ENCODE measurements at regions of chr3 and their contacts with region 1.

Region 1: DNA sequence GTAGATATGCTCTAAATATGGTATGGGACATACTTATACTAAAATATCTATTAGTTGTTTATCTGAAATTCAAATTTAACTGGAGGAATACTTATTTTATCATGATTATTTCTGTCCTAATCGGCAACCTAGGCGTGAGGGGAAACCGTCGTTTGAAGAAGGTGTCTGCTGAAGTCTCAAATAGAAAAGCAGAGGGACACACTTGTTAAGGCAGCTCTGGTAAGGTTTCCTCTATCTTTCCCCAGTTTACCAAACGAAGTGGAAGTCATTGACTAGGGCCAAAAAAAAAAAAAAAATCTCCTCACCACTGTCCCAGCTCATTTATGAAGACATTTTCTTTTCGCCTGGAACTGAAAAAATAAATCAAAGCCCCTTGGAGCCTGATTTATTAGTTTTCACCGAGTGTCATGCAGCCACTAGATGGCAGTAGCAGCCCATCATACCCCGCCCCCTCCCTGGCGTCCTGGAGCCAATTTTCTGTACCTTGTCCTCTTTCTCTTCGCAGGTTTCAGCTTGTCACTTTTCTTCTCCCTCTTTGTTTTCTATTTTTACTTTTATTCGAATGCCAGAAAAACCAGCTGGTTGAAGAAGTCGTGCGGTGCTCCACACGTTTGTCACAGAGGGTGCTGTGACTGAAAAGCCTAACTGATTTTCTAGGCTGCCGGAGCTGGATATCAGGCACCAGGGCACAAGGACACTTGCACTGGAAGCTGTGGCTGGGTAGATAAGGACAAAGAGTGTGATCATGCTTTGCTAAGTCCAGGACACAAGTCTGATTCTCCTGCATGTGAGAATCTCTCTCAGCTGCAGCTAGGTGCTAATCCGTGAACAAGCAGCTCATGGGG is 238.7 kb downstream of the ZPLD1 start:
- DNase-seq: peak; percentile 33
- ATAC-seq: peak; percentile 96
- H3K4me3 ChIP-seq: no peak overlapping the region
- H3K27ac ChIP-seq: no peak overlapping the region
- H3K4me1 ChIP-seq: peaks cover 16% of the 10 kb centered on the region
- H3K27me3 ChIP-seq: no peaks in the 10 kb centered on the region
- CTCF ChIP-seq: peak; percentile 86
- EP300 ChIP-seq: no peak
- POLR2A ChIP-seq: no peak
- RAD21 ChIP-seq: peak; percentile 69; the same call in 1 of the 2 replicates

Region 2: GRCh38 chr3:102229062-102229655 is 444.3 kb before region 1 on chr3:
- CTCF ChIA-PET with region 1: no interaction called
- POLR2A ChIA-PET with region 1: no interaction called
- in situ Hi-C with region 1: no loop called
- intact Hi-C with region 1: loop called (anchors 5 kb)
- DNase-seq: peak; percentile 51
- ATAC-seq: peak; percentile 88
- H3K4me3 ChIP-seq: no peak overlapping the region
- H3K27ac ChIP-seq: no peak overlapping the region
- H3K4me1 ChIP-seq: no peaks in the 10 kb centered on the region
- H3K27me3 ChIP-seq: no peaks in the 10 kb centered on the region
- CTCF ChIP-seq: peak; percentile 87
- EP300 ChIP-seq: no peak
- POLR2A ChIP-seq: no peak
- RAD21 ChIP-seq: peak; percentile 62; the same call in 1 of the 2 replicates

Region 3: GRCh38 chr3:102741108-102741507 is 67.6 kb after region 1 on chr3:
- CTCF ChIA-PET with region 1: interaction called, 4 read pairs
- POLR2A ChIA-PET with region 1: no interaction called
- in situ Hi-C with region 1: no loop called
- intact Hi-C with region 1: loop called (anchors 1 kb)
- DNase-seq: no peak
- ATAC-seq: peak; percentile 83
- H3K4me3 ChIP-seq: no peak overlapping the region
- H3K27ac ChIP-seq: no peak overlapping the region
- H3K4me1 ChIP-seq: no peaks in the 10 kb centered on the region
- H3K27me3 ChIP-seq: no peaks in the 10 kb centered on the region
- CTCF ChIP-seq: peak; percentile 44
- EP300 ChIP-seq: no peak
- POLR2A ChIP-seq: no peak
- RAD21 ChIP-seq: no peak

Region 4: GRCh38 chr3:103127737-103128136 is 454.2 kb after region 1 on chr3:
- CTCF ChIA-PET with region 1: no interaction called
- POLR2A ChIA-PET with region 1: no interaction called
- in situ Hi-C with region 1: no loop called
- intact Hi-C with region 1: loop called (anchors 10 kb)
- DNase-seq: no peak
- ATAC-seq: no peak
- H3K4me3 ChIP-seq: no peak overlapping the region
- H3K27ac ChIP-seq: no peak overlapping the region
- H3K4me1 ChIP-seq: no peaks in the 10 kb centered on the region
- H3K27me3 ChIP-seq: no peaks in the 10 kb centered on the region
- CTCF ChIP-seq: no peak
- EP300 ChIP-seq: no peak
- POLR2A ChIP-seq: no peak
- RAD21 ChIP-seq: no peak

Region 5: DNA sequence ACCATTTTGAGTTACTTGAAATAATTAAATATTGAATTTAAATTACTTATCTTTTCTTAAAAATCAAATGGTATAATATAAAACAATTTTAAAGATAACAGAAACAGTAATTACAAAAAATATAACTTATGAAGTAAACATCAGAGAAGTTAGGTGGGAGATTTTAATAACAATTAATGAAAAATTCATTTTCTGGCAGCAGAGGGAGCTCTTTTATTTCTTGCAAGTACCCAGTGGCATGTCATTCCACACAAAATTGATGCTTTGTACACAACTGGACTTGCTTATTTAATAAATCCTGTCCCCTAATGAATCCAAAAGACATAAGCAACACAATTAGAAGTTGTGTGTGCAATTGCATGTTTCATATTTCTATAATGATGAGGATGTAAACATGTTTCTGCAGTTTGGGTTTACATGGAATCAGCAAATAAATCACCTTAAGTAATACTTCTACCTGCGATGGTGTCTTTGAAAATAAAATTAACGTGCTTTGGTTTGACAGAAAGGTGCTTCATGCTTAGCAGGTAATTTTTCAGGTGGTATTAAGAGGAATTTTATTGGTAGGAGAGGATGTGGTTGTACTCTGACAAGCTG is 622.6 kb after region 1 on chr3:
- CTCF ChIA-PET with region 1: no interaction called
- POLR2A ChIA-PET with region 1: no interaction called
- in situ Hi-C with region 1: no loop called
- intact Hi-C with region 1: loop called (anchors 2 kb)
- DNase-seq: peak; percentile 5
- ATAC-seq: no peak
- H3K4me3 ChIP-seq: no peak overlapping the region
- H3K27ac ChIP-seq: no peak overlapping the region
- H3K4me1 ChIP-seq: no peaks in the 10 kb centered on the region
- H3K27me3 ChIP-seq: no peaks in the 10 kb centered on the region; a peak in 1 of 5 replicates
- CTCF ChIP-seq: 0 out of 2 replicates have a peak, but pooled peaks have one; percentile 5
- EP300 ChIP-seq: no peak
- POLR2A ChIP-seq: no peak
- RAD21 ChIP-seq: no peak

Region 6: DNA sequence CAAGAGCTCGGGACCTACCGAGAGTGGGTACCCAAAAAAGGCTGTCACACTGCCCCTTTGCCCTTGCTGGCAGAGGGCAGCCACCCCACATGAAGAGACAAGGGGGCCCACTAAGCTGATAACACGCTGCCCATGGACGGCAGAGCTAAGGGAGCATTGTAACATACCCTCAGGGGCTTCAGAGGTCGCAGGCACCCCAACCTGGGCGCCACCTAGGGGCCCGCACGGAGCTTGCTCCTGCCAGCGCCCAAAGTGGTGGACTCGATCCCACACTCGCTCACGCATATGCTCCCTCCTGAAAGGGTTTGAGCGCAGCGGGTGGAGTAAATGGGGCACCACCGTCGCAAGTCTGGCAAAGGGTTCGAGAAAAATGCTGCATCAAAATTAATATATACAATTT is 736.7 kb after region 1 on chr3:
- CTCF ChIA-PET with region 1: interaction called, 3 read pairs
- POLR2A ChIA-PET with region 1: no interaction called
- in situ Hi-C with region 1: loop called (anchors 25 kb)
- intact Hi-C with region 1: no loop called
- DNase-seq: no peak
- ATAC-seq: peak; percentile 90
- H3K4me3 ChIP-seq: no peak overlapping the region
- H3K27ac ChIP-seq: no peak overlapping the region
- H3K4me1 ChIP-seq: no peaks in the 10 kb centered on the region
- H3K27me3 ChIP-seq: no peaks in the 10 kb centered on the region; a peak in 1 of 5 replicates
- CTCF ChIP-seq: peak; percentile 64
- EP300 ChIP-seq: no peak
- POLR2A ChIP-seq: no peak
- RAD21 ChIP-seq: no peak